HepG2 (cell line): ENCODE measurements at regions of chr7 and their contacts with region 1.

Region 1: DNA sequence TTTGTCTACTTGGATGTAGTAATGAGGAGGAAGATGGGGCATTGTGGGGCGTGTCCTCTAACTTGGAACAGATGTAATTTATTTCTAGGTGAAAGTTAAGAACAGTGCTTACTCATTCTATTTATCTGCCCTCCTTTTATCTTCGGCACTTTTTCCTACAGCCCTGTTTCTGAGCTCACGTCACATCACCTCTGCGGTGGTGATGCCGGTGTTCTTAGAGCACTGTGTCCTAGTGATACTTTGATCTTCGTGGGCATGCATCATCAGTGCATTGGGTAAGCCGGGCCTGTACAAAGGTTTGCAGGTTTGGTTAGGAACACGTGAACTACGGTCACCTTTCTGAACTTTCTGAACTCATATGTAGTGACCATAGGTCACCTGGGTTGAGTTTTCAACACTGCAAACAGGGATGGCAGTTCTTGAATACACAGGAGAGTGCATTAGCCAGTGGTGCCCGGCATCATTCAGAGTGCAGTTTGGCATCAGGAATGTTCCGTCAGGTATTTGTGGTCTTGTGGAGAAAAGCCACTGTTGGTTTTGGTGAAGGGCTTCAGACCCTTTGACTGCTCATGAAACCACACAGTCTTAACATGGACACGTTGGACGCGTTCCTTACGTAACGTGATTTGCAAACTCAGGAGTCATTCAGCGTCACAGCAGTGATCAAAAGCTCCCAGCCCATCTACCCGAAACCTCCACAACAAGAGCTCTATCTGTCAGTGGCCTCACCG is 5.6 kb downstream of the POR start:
- DNase-seq: peak; percentile 99
- ATAC-seq: peak; percentile 87
- H3K4me3 ChIP-seq: peak overlapping the region in 1 of 3 experiments; percentile 64; a peak in 2 of 6 replicates
- H3K27ac ChIP-seq: peak overlapping the region; percentile 90
- H3K4me1 ChIP-seq: peaks cover 88% of the 10 kb centered on the region
- H3K27me3 ChIP-seq: no peaks in the 10 kb centered on the region; a peak in 1 of 5 replicates
- CTCF ChIP-seq: no peak
- EP300 ChIP-seq: peak; percentile 94 to 96
- POLR2A ChIP-seq: peak in 1 of 2 experiments; percentile 77; a peak in 3 of 4 replicates
- RAD21 ChIP-seq: peak; percentile 50; the same call in 1 of the 2 replicates

Region 2: GRCh38 chr7:75776295-75776971 is 144.2 kb before region 1 on chr7:
- CTCF ChIA-PET with region 1: no interaction called
- POLR2A ChIA-PET with region 1: no interaction called
- in situ Hi-C with region 1: no loop called
- intact Hi-C with region 1: no loop called
- DNase-seq: no peak
- ATAC-seq: no peak
- H3K4me3 ChIP-seq: no peak overlapping the region
- H3K27ac ChIP-seq: no peak overlapping the region
- H3K4me1 ChIP-seq: peaks cover 20% of the 10 kb centered on the region
- H3K27me3 ChIP-seq: peaks cover 0 to 12% of the 10 kb centered on the region in 2 experiments; a peak in 2 of 5 replicates
- CTCF ChIP-seq: no peak
- EP300 ChIP-seq: no peak
- POLR2A ChIP-seq: no peak
- RAD21 ChIP-seq: no peak

Region 3: DNA sequence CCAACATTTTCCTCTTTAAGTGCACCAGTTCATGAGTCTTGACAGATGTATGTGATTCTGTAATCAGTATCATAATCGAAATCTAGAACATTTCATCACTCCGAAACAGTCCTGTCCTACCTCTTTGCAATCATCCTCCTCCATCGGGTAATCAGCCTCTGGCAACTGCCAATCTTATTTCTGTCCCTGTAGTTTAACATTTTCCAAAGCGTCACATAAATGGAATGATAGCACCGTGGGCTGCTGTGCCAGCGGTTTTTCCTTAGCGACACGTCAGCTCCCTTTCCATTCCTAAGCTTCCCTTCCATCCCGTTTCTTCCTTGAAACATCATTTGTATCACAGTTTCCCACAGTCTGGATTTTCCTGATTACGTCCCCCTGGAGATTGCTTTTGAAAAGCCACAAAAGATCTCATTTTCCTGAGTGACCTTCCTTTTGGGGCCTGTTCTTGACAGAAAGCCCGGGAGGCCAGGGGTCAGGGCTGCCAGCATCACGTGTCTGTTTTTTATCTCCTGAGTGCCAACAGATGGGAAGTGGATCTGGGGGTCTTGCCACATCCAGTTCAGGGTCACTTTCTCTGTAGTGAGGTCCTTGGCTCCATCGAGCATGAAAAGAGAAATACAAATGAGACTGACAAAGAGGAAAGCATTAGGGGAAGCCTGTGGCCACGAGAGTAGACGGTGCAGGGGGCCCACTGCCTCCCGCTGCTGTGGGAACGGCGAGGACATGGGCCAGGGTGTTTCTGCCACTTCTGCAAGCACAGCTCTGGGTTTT is 42.2 kb after region 1 on chr7:
- CTCF ChIA-PET with region 1: no interaction called
- POLR2A ChIA-PET with region 1: interaction called, 14 read pairs
- in situ Hi-C with region 1: loop called (anchors 5 kb)
- intact Hi-C with region 1: loop called (anchors 5 kb)
- DNase-seq: peak; percentile 79
- ATAC-seq: peak; percentile 64
- H3K4me3 ChIP-seq: no peak overlapping the region
- H3K27ac ChIP-seq: peak overlapping the region; percentile 71
- H3K4me1 ChIP-seq: peaks cover 58% of the 10 kb centered on the region
- H3K27me3 ChIP-seq: no peaks in the 10 kb centered on the region
- CTCF ChIP-seq: no peak
- EP300 ChIP-seq: peak in 1 of 2 experiments; percentile 87; a peak in 2 of 4 replicates
- POLR2A ChIP-seq: no peak
- RAD21 ChIP-seq: no peak

Region 4: DNA sequence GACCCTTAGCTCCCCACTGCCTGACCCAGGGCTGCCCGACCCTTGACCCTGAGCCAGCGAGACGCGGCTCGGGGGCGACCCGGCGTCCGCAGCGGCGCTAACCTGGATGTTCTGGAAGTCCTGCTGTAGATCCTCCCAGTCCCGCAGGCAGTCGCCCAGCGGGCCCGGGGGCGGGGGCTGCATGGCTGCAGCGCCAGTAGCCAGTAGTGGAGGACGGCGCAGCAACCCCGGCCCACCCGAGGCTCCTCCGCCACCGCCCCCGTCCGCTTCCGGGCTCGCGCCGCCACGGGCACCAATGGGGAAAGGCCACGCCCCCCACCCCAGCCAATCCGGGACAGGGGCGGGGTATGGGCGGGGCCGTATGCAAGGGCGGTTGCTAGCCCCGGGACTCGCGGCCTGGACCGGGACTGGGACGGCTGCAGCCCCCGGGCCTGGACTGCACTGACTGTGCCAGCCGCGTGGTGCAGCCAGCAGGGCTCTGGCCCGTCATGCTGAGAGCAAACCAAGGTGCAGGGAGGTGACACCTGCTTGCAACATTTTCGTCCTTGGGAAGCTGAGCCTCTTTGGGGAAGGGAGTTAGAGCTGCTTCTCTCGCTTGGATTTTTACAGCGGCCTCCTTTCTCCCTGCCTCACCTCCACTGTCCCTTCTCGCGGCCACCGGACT is 73.9 kb after region 1 on chr7 and contains the start of gene TMEM120A:
- CTCF ChIA-PET with region 1: no interaction called
- POLR2A ChIA-PET with region 1: interaction called, 26 read pairs
- in situ Hi-C with region 1: no loop called
- intact Hi-C with region 1: loop called (anchors 2 kb)
- DNase-seq: peak; percentile 88
- ATAC-seq: peak; percentile 86
- H3K4me3 ChIP-seq: peak within 1 kb of the TSS; percentile 88 to 98 (median 91)
- H3K27ac ChIP-seq: peak within 1 kb of the TSS; percentile 97
- H3K4me1 ChIP-seq: peaks cover 34% of the 10 kb centered on the region
- H3K27me3 ChIP-seq: no peaks in the 10 kb centered on the region
- CTCF ChIP-seq: peak; percentile 25; the same call in 1 of the 2 replicates
- EP300 ChIP-seq: 0 out of 4 replicates have a peak, but pooled peaks of 1 of the 2 experiments have one; percentile 20
- POLR2A ChIP-seq: peak in 1 of 2 experiments; percentile 96; a peak in 2 of 4 replicates
- RAD21 ChIP-seq: peak; percentile 26; the same call in 1 of the 2 replicates
- total RNA-seq, gene TMEM120A: 22.9 and 40.3 TPM in 2 replicates